GM10248 (cell line): ENCODE measurements at regions of chr16 and their contacts with region 1.

Region 1: DNA sequence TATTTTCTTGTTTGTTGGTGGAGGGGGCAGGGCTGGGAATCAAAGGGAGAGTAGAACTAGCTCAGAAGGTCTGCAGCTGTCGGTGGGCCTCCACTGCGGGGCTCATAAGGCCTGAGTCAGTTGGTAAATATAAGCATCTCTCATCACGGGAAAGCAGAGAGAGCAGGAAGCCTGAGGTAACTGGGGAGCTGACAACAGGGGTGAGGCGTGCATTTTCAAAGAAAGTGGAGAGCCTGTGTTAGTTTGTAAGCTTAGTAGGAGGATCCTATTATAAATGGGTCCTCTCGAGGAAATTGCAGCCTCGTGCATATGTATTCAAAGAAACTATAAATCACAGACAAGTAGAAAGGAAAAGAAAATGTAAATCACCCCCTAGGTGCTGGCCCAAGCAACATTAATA is 221.0 kb upstream of the CDH13 start:
- DNase-seq: no peak
- CTCF ChIP-seq: no peak

Region 2: GRCh38 chr16:82421851-82422250 is 16.1 kb after region 1 on chr16:
- CTCF ChIA-PET with region 1: interaction called, 10 read pairs
- POLR2A ChIA-PET with region 1: no interaction called
- DNase-seq: no peak
- CTCF ChIP-seq: no peak